ENCODE measurements at regions of chr5 and their contacts with region 1.

Region 1: GRCh38 chr5:158695595-158696330 is 404.0 kb downstream of the EBF1 start:
- DNase-seq: peak; percentile 46
- H3K4me3 Mint-ChIP-seq: no peak overlapping the region
- H3K27ac Mint-ChIP-seq: no peak overlapping the region
- H3K4me1 Mint-ChIP-seq: peaks cover 5% of the 10 kb centered on the region
- H3K27me3 Mint-ChIP-seq: peaks cover 8% of the 10 kb centered on the region

Region 2: GRCh38 chr5:158074992-158075769 is 620.6 kb before region 1 on chr5:
- intact Hi-C with region 1: loop called (anchors 2 kb)
- DNase-seq: peak; percentile 12
- H3K4me3 Mint-ChIP-seq: no peak overlapping the region
- H3K27ac Mint-ChIP-seq: no peak overlapping the region
- H3K4me1 Mint-ChIP-seq: no peaks in the 10 kb centered on the region
- H3K27me3 Mint-ChIP-seq: peaks cover 16% of the 10 kb centered on the region

Region 3: DNA sequence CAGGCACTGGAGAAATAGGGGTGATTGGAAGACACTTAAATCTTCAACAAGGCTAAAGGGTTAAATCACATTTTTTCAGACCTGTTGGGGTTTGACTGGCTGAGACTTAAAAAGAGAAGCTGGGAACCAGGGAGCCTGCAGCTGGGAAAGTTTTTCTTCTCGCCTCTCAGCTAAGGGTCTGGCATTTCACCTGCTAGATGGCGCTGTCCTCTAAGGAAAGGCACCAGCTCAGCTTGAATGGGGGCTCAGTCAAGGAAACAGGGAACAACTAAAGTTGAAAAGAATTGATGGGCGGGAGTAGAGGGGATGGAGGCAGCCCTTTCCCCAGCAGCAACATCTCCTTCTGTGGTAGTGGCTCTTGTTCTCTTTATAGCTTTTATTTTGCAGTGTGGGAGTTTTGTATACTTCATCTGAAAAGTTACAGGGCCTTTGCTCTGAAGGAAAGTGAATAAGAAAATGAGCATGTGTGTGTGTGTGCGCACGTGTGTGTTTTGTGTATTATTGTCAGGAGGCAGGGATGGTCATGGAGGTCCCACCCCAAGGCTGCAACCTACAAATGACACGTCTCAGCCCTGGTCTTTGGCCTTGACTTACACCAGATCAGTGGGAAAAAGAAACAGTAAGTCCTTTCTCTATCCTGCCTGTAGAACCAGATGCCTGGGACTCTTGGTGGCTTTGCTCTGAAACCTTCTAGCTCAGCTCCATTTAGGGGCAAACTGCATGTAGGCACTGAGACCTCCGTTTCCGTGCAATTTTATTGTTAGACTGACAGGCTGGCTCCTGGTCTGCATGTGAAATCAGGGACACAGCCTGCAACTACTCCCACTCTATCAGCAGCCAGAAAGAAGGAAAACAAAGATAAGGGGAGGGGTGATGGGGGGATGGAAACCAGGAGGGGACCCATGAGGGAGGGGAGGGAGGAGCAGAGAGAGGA is 520.6 kb before region 1 on chr5:
- intact Hi-C with region 1: loop called (anchors 5 kb)
- DNase-seq: peak; percentile 14
- H3K4me3 Mint-ChIP-seq: no peak overlapping the region
- H3K27ac Mint-ChIP-seq: no peak overlapping the region
- H3K4me1 Mint-ChIP-seq: no peaks in the 10 kb centered on the region
- H3K27me3 Mint-ChIP-seq: no peaks in the 10 kb centered on the region

Region 4: DNA sequence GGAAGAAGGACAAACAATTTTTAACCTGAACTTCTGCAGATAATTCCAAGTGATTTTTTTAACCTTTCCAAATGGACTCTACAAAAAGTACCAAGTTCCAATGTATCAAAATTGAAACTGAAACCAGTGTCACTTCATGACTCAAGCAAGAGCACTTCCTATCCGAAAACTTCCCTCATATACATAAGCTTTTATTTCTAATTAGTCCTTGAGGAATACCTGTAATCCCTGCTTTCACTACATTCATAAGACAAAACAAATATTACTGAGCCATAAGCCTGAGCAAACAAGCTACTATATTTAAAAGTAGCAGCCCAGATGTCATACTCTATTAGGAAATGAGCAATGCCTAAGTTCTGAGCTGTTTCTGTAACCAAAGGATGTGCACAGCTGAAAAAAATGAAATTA is 179.5 kb after region 1 on chr5:
- intact Hi-C with region 1: loop called (anchors 10 kb)
- DNase-seq: no peak
- H3K4me3 Mint-ChIP-seq: peak overlapping the region; percentile 9
- H3K27ac Mint-ChIP-seq: peak overlapping the region; percentile 55
- H3K4me1 Mint-ChIP-seq: peaks cover 47% of the 10 kb centered on the region
- H3K27me3 Mint-ChIP-seq: peaks cover 4% of the 10 kb centered on the region

Region 5: DNA sequence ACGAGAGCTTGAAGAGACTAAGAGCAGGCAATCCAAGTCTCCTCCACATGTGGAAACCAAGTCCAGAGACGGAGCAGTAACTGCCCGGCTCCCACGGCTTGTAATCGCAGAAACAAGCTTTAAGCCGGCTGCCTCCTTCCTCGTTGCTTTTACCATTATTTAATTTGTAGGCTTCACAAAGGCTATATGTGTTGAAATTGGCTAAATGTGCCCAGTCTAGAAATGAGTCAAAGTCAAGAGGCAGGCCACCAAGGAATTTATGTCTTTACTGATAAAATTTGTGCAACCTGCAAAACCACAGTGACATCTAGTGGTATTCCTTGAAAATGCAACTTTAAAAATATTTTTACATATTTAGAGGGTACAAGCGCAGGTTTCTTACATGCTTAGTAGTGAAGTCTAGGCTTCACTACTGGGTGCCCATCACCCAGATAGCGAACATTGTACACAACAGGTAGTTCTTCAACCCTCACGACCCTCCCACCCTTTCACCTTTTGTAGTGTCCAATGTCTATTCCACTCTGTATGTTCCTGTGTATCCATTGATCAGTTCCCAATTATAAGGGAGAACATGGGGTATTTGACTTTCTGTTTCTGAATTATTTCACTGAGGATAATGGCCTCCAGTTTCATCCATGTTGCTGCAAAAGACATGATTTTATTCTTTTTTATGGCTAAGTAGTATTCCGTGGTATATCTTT is 437.4 kb after region 1 on chr5:
- intact Hi-C with region 1: loop called (anchors 1 kb)
- DNase-seq: no peak
- H3K4me3 Mint-ChIP-seq: no peak overlapping the region
- H3K27ac Mint-ChIP-seq: no peak overlapping the region
- H3K4me1 Mint-ChIP-seq: no peaks in the 10 kb centered on the region
- H3K27me3 Mint-ChIP-seq: peaks cover 23% of the 10 kb centered on the region